Right ventricle myocardium superior (tissue), 1 donor: ENCODE measurements at regions of chr6 and their contacts with region 1.

Region 1: DNA sequence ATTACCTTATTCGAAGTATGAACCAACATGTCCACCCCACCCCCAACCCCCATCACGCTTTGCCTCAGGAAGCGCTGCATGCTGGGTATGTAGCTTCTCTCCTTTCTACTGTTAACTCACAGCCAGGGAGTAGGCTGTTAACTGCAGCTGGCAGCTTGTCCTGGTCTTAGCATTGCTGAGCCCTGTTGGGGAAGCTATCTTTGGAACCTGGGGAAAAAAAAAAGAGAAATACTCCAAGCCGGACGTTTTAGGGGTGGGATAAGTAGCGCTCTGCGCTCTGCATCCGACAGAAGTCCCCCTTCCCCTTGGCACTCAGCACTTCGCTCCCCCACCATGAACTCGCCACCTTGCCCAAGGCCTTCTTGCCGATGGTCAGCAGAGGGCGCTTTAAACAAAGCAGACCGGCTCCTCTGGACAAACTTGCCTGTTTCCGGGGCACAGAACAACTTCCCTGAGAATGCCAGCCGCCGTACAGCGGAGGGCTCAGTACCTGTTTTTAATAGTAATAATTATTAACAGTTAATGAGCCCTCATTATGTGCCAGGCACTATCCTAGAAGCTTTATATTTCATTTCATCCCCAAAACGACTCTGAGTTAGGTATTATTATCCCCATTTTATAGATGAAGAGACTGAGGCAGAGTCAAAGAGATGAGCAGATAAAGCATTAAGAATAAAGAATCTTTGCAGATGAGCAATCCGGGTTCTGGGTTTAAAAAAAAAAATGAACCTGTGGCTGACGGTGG is 35.2 kb upstream of the MDFI start:
- DNase-seq: peak; percentile 81
- ATAC-seq: peak; percentile 89

Region 2: DNA sequence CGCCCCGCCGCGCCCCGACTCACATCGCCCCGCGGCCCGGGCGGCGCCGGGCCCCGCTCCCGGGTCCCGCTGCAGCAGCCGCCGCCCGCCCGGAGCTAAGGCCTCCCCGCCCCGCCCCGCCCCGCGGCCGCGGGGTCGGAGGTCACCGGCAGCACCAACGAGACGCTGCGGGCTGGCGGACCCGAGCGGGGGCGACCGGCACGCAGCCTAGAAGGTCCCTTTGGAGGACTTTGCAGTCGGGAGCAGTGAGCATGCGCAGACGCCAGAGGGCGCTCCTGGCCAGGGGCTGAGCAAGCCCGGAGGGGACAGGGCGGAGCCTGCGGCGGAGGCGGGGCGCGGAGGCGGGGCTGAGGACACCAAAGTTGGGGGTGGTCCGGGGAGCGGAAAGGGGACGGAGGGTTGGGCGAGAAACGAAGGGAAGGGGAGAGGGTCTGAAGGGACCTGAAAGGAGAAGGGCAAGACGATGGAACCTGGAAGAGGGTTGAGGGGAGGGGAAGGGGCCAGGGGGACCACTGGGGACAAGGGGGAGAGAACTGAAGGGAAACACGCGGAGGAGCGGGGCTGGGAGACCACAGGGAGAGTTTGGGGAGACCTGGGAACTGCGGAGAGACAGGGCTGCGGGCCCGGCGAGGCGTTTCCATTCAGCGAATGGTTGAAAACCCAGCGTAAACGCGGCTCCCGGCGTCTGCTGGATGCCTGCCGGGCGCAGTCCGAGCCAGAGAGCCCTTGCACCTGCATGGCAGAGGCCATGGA is 176.9 kb after region 1 on chr6 and contains the start of gene FRS3:
- intact Hi-C with region 1: loop called (anchors 10 kb)
- DNase-seq: peak; percentile 99
- ATAC-seq: peak; percentile 96
- total RNA-seq, gene FRS3: 4.8 TPM